ENCODE measurements at regions of chr11 and their contacts with region 1.

Region 1: DNA sequence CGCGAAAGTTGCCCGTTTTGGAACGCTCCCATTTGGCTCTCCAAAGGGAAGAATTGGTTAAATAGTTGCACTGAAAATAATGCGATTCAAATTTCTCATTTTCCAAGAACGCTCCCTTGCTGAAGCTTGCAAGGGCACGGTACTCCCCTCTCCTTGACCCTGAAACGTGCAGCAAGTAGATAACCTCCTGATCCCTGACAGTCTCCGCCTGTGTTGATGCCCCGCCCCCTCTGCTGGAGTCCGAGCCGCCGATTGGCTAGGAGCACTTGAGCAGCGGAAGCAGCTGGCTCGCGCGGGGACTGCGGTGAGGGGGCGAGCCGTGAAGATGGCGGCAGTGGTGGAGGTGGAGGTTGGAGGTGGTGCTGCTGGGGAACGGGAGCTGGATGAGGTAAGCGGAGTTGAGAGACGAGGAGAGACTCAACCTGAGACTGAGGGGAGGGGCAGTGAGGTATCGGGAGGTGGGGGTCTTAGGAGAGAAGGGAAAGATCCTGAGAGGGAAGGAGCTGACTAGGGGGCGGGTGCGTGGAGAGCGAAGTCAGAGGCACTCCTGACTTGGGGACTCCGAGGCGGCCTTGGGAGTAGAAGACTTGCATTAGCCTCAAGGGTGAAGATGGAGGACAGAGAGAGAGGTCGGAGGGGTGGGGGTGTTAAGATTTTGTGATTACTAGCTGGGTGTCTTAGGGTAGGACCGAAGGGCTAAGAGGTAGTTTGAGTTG is at the start of gene RNF121:
- DNase-seq: peak; percentile 90
- ATAC-seq: peak; percentile 88
- H3K4me3 Mint-ChIP-seq: peak within 1 kb of the TSS; percentile 95
- H3K27ac Mint-ChIP-seq: peak within 1 kb of the TSS; percentile 98
- H3K4me1 Mint-ChIP-seq: peaks cover 58% of the 10 kb centered on the region
- H3K27me3 Mint-ChIP-seq: no peaks in the 10 kb centered on the region
- CTCF ChIP-seq: no peak
- total RNA-seq, gene RNF121: 44.4 and 47.4 TPM in 2 replicates

Region 2: GRCh38 chr11:71787098-71787823 is 141.6 kb before region 1 on chr11:
- CTCF ChIA-PET with region 1: no interaction called
- POLR2A ChIA-PET with region 1: interaction called, 6 read pairs
- intact Hi-C with region 1: loop called (anchors 2 kb)
- DNase-seq: peak; percentile 95
- ATAC-seq: peak; percentile 95
- H3K4me3 Mint-ChIP-seq: peak overlapping the region; percentile 95
- H3K27ac Mint-ChIP-seq: peak overlapping the region; percentile 96
- H3K4me1 Mint-ChIP-seq: peaks cover 19% of the 10 kb centered on the region
- H3K27me3 Mint-ChIP-seq: no peaks in the 10 kb centered on the region
- CTCF ChIP-seq: no peak

Region 3: DNA sequence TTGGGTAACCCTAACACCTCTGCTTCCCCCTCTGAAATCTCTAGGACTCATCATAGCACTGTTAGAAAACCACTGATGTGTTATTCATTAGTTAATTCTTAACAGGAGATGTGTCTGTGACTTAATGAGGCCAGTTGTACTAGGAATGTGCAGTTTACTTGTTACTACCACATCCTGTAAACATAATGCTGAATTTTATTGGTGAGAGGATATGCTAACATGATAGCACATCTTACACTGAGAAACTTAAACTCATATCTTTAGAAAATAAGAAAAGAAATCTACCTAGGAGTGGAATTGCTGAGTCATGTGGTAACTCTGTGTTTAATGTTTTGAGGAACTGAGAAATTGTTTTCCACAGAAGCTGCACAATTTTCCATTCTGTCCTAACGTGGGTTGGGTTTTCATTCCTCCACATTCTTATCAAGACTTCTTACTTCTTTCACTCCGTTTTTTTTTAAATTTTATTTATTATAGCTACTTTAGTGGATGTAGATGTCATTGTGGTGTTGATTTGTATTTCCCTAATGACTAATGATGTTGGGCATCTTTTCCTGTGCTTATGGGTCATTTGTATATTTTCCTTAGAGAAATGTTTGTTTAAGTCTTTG is 33.6 kb after region 1 on chr11:
- CTCF ChIA-PET with region 1: no interaction called
- POLR2A ChIA-PET with region 1: interaction called, 4 read pairs
- intact Hi-C with region 1: loop called (anchors 1 kb)
- DNase-seq: no peak
- ATAC-seq: peak; percentile 77
- H3K4me3 Mint-ChIP-seq: no peak overlapping the region
- H3K27ac Mint-ChIP-seq: peak overlapping the region; percentile 75
- H3K4me1 Mint-ChIP-seq: peaks cover 19% of the 10 kb centered on the region
- H3K27me3 Mint-ChIP-seq: no peaks in the 10 kb centered on the region
- CTCF ChIP-seq: no peak

Region 4: DNA sequence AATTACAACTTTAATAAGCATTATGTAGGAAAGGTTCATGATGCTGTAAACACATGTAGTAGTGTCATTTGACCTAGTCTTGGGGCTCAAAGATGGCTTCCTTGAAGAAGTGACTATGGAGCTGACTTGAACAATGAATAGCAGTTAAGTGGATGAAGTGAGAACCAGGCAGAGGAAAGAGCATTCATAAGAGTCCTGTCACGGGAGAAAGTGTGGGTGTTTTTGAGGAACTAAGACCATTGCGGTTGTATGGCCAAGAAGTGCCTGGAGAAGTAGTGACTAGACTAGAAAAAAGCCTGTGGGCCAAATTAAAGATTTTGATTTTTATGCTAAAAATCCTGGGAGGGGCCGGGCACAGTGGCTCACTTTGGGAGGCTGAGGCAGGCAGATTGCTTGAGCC is 62.6 kb after region 1 on chr11:
- CTCF ChIA-PET with region 1: no interaction called
- POLR2A ChIA-PET with region 1: interaction called, 8 read pairs
- intact Hi-C with region 1: loop called (anchors 2 kb)
- DNase-seq: no peak
- ATAC-seq: peak; percentile 82
- H3K4me3 Mint-ChIP-seq: peak overlapping the region; percentile 62
- H3K27ac Mint-ChIP-seq: peak overlapping the region; percentile 82
- H3K4me1 Mint-ChIP-seq: peaks cover 60% of the 10 kb centered on the region
- H3K27me3 Mint-ChIP-seq: no peaks in the 10 kb centered on the region
- CTCF ChIP-seq: no peak

Region 5: DNA sequence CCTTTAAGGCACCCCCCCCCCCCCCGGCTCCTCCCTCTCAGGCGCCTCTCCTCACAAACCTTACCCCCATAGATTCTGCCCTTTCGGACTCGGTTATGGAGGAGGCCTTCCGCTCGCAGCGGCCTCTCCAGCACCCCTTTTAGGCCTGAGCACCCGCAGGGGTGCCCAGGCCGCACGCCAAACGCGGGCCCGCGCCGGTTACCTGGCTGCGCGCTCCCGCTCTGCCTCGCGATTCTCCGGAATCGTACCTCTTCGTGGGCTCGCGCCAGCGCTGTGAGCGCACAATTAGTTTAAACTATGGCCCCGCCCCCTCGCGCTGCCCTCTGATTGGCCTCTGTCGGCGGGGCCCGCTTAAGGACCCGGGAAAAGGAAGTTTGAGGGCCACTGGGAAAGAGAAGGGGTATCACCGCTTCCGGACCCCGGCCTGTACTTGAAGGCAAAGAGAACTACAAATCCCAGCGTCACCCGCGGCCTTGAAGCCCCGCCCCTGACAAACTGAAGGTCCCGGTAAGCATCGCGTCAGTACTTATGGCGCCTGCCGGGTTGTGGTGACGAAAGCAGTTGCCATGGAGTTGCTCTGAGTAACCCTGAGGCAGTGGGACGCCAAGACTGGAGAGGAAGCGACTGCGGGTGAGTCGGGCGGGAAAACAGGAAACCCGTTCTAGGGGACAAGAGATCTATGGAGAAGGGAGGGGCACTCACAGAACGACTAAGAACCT is 151.5 kb after region 1 on chr11 and contains the starts of genes LRRC51 and NUMA1:
- CTCF ChIA-PET with region 1: no interaction called
- POLR2A ChIA-PET with region 1: no interaction called
- intact Hi-C with region 1: loop called (anchors 1 kb)
- DNase-seq: peak; percentile 94
- ATAC-seq: peak; percentile 90
- H3K4me3 Mint-ChIP-seq: peak within 1 kb of the TSS; percentile 95
- H3K27ac Mint-ChIP-seq: peak within 1 kb of the TSS; percentile 91
- H3K4me1 Mint-ChIP-seq: peaks cover 35% of the 10 kb centered on the region
- H3K27me3 Mint-ChIP-seq: no peaks in the 10 kb centered on the region
- CTCF ChIP-seq: no peak
- total RNA-seq, gene LRRC51: 4.1 and 4.5 TPM in 2 replicates
- total RNA-seq, gene NUMA1: 146 and 163 TPM in 2 replicates

Region 6: DNA sequence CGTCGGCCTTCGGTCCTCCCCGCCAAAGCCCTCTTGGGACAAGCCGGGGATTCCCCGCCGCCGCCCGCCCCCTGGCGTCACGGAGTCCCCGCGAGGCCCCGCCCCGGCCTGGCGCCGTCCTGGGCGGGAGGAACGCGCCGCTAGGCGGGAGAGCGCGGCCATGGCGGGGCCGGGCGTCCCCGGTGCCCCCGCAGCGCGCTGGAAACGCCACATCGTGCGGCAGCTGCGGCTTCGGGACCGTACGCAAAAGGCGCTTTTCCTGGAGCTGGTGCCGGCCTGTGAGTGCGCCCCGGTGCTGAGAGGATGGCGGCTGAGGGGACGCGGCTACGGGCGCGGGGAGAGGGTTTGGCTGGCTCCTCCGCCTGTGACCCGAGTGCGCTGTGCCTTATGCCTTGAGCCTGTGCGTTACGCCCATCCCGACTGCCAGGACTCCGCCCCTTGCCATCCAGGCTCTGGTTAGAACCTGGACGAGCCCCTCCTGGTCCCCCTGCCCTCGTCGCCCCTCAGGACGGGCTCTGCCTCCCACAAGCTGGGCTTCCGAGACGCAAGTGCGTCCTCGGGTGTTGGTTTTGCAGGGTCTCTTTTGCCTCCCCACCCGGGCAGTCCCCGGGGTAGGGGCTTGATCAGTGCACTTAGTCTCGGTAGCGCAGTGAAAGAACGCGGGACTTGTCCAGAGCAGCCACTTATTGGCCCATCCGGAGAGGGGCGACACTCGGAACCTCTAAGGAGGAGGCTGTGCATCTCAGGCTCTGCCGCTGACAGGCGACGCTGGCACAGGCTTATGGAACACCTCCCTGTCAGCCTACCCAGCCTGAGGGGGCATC is 885.6 kb after region 1 on chr11 and contains the start of gene ATG16L2:
- CTCF ChIA-PET with region 1: no interaction called
- POLR2A ChIA-PET with region 1: no interaction called
- intact Hi-C with region 1: loop called (anchors 5 kb)
- DNase-seq: peak; percentile 97
- ATAC-seq: peak; percentile 75
- H3K4me3 Mint-ChIP-seq: peak within 1 kb of the TSS; percentile 98
- H3K27ac Mint-ChIP-seq: peak within 1 kb of the TSS; percentile 94
- H3K4me1 Mint-ChIP-seq: peaks cover 54% of the 10 kb centered on the region
- H3K27me3 Mint-ChIP-seq: no peaks in the 10 kb centered on the region
- CTCF ChIP-seq: no peak
- total RNA-seq, gene ATG16L2: 73.5 and 96.7 TPM in 2 replicates